Spleen (tissue), 13 donors: ENCODE measurements at regions of chr6 and their contacts with region 1.

Region 1: DNA sequence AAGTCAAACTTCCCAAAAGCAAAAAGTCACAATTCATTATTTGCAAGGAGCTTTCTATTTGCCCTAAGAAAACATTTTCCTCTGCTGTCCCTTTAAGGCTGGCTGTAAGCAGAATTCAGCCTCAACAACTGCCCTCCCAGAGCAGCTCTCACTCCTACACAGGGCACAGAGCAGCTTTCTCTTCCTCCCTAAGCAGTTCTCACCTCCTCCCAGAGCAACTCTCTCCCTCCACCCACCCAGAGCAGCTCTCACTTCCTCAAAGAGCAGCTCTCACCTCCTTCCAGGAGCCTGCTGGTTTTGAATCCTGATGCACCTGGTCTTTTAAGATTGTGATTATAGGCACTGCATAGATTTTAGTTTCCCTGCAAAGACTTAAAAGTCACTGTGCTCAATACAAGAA is 120.6 kb upstream of the TMEM181 start:
- DNase-seq: no peak
- H3K4me3 ChIP-seq: no peak overlapping the region
- H3K27ac ChIP-seq: no peak overlapping the region
- H3K4me1 ChIP-seq: peaks cover 0 to 10% (median 0%) of the 10 kb centered on the region in 6 donors
- H3K27me3 ChIP-seq: no peaks in the 10 kb centered on the region
- CTCF ChIP-seq: no peak
- POLR2A ChIP-seq: no peak

Region 2: GRCh38 chr6:158377860-158378259 is 61.4 kb before region 1 on chr6:
- intact Hi-C with region 1: loop called (anchors 10 kb)
- DNase-seq: no peak
- H3K4me3 ChIP-seq: no peak overlapping the region
- H3K27ac ChIP-seq: no peak overlapping the region
- H3K4me1 ChIP-seq: peaks cover 0 to 7% (median 2%) of the 10 kb centered on the region in 6 donors
- H3K27me3 ChIP-seq: no peaks in the 10 kb centered on the region
- CTCF ChIP-seq: no peak
- POLR2A ChIP-seq: no peak

Region 3: DNA sequence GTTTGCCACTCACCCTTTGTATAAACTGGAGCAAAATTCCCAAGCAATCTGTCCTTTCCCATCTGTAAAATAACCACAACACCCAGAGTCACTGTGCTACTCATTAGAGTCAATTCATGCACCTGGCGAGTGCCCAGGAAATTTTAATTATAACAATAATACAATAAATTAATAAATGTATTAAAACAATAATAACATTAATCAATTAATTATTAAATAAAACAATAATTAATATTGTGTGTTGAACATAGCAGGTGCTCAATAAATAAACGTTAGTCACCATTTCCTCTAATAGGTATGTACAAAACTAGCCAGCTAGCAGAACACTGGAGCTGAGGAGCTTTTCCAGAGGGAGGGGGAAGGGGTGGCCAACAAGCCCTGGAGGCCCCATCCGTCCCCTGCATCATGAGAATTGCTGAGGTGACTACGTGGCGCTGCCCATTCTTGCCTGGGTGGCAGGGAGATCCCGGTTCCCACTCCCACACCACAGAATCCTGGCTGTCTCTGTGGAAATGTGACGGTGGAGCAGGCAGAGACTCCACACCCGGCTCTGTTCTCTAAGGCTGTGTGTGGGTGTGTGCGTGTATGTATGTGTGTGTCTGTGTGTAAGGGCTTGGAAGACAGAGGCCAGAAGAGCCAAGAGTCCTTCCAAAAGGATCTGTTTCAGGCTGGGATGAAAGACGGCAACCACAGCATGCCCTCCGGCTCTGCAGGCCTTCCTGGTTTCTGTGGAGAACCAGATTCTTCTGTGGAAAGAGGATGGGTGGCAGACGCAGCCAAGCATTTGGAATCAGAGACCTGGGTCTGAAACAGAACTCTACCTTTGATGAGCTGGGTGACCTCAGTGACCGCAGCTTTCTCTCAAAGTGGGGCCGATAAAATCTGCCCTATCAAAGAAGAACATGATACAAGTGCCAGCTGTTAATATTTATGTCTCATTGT is 398.7 kb after region 1 on chr6:
- intact Hi-C with region 1: no loop called
- DNase-seq: no peak
- H3K4me3 ChIP-seq: no peak overlapping the region
- H3K27ac ChIP-seq: no peak overlapping the region
- H3K4me1 ChIP-seq: peaks cover 0 to 12% (median 0%) of the 10 kb centered on the region in 6 donors
- H3K27me3 ChIP-seq: no peaks in the 10 kb centered on the region
- CTCF ChIP-seq: no peak
- POLR2A ChIP-seq: no peak